CD8-positive, alpha-beta T cell (primary cell): ENCODE measurements at regions of chr5 and their contacts with region 1.

Region 1: DNA sequence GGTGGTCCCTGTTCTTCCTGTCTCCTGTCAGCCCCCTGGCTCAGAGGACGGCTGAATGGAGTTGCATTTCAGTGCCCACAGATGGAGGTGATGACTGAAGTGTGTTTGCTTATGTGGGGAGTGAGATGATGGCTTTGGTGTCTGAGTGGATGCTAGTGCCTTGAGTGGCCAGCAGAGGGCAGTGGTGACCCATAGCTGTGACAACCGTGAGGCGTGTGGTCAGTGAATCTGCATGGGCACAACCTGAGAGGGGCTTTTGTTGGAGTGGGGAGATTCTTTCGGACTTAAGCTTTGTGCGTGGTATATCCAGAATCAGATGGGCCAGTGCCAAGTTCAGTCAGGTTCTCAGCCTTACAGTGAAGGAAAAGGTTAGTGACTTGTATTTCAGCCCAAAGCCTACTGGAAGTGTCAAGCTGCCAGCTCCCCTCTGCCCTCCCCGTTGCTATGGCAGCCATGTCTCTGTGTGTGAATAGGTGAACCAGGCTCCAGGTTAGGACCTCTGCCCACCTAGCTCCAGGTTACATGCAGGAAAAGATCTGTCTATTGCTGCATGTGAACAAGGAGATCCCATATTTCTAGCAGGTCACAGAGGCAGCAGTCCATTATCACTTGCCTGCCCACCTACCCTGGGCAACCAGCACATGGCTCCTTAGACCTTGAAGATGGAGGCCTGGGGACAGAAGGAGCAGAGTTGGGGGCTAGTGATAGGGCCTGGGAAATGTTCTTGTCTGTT is 14.7 kb upstream of the CXXC5 start:
- DNase-seq: peak in 8 of 9 experiments; percentile 45 to 85 (median 71)
- ATAC-seq: peak; percentile 35
- H3K4me3 ChIP-seq: no peak overlapping the region
- H3K4me3 Mint-ChIP-seq: no peak overlapping the region
- H3K27ac ChIP-seq: no peak overlapping the region
- H3K27ac Mint-ChIP-seq: peak overlapping the region; percentile 24
- H3K4me1 ChIP-seq: peaks cover 42% of the 10 kb centered on the region
- H3K4me1 Mint-ChIP-seq: peaks cover 41% of the 10 kb centered on the region
- H3K27me3 ChIP-seq: no peaks in the 10 kb centered on the region
- H3K27me3 Mint-ChIP-seq: no peaks in the 10 kb centered on the region
- CTCF ChIP-seq: peak; percentile 89

Region 2: GRCh38 chr5:139415221-139415861 is 218.1 kb before region 1 on chr5:
- CTCF ChIA-PET with region 1: interaction called, 20 read pairs
- POLR2A ChIA-PET with region 1: no interaction called
- intact Hi-C with region 1: loop called in 1 of 2 experiments (anchors 5 kb)
- DNase-seq: no peak
- ATAC-seq: no peak
- H3K4me3 ChIP-seq: no peak overlapping the region
- H3K4me3 Mint-ChIP-seq: no peak overlapping the region
- H3K27ac ChIP-seq: no peak overlapping the region
- H3K27ac Mint-ChIP-seq: no peak overlapping the region
- H3K4me1 ChIP-seq: no peaks in the 10 kb centered on the region
- H3K4me1 Mint-ChIP-seq: peaks cover 5% of the 10 kb centered on the region
- H3K27me3 ChIP-seq: no peaks in the 10 kb centered on the region
- H3K27me3 Mint-ChIP-seq: no peaks in the 10 kb centered on the region
- CTCF ChIP-seq: no peak

Region 3: GRCh38 chr5:139560752-139561654 is 72.5 kb before region 1 on chr5 and contains the start of gene UBE2D2:
- CTCF ChIA-PET with region 1: interaction called, 37 read pairs
- POLR2A ChIA-PET with region 1: interaction called, 8 read pairs
- intact Hi-C with region 1: loop called in 1 of 2 experiments (anchors 1 kb)
- DNase-seq: peak; percentile 96 to 99 (median 97)
- ATAC-seq: peak; percentile 84
- H3K4me3 ChIP-seq: peak within 1 kb of the TSS; percentile 84 to 91
- H3K4me3 Mint-ChIP-seq: peak within 1 kb of the TSS; percentile 93
- H3K27ac ChIP-seq: peak within 1 kb of the TSS; percentile 87 to 89
- H3K27ac Mint-ChIP-seq: peak within 1 kb of the TSS; percentile 97
- H3K4me1 ChIP-seq: peaks cover 30% of the 10 kb centered on the region
- H3K4me1 Mint-ChIP-seq: peaks cover 35% of the 10 kb centered on the region
- H3K27me3 ChIP-seq: no peaks in the 10 kb centered on the region
- H3K27me3 Mint-ChIP-seq: no peaks in the 10 kb centered on the region
- CTCF ChIP-seq: no peak
- total RNA-seq, gene UBE2D2: 180 TPM

Region 4: DNA sequence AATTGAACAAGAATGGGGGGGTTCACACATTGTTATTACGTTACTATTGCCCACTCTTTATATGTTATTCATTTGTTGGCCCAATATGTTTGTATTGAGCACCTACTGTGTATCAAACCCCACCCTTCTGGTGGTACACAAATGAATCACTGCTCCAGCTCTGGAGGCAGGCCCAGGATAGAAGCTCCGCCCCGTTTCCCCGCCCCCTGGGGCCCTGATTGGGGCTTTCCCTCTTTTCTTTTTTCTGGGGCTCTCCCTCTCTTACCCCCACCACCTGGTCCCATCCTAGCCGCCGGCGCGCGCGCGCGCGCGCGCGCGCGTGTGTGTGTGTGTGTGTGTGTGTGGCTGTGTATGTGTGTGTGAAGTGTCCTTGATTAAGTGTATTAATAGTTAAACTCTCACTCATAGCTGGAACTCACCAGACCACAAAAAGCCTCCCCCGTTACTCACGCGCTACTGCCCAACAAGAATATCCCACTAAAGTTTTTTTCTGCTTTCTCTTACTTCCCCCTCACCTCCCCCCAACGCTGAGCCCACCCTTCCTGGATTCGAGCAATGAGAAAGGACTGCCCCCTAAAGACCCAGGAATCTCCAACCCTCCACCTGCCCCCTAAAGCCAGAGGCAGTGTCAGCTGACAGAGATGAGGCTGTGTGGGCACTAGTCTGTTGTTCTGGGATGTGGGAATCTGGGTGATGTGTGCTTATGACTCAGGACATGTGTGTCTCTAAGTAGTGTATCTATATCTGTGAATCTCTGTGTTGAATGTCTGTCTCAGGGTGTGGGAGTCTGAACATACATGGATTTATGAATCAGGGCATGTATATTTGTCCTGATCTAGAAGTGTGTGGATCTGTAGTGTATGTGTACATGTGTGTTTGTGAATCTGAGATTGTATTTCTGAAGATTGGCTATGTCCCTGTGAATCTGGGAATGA is 18.7 kb after region 1 on chr5:
- CTCF ChIA-PET with region 1: interaction called, 104 read pairs
- POLR2A ChIA-PET with region 1: interaction called, 42 read pairs
- intact Hi-C with region 1: loop called (anchors 1 kb)
- DNase-seq: peak in 7 of 9 experiments; percentile 43 to 88 (median 79)
- ATAC-seq: peak; percentile 65
- H3K4me3 ChIP-seq: no peak overlapping the region
- H3K4me3 Mint-ChIP-seq: peak overlapping the region; percentile 16
- H3K27ac ChIP-seq: peak overlapping the region in 1 of 2 experiments; percentile 26
- H3K27ac Mint-ChIP-seq: peak overlapping the region; percentile 47
- H3K4me1 ChIP-seq: peaks cover 60% of the 10 kb centered on the region
- H3K4me1 Mint-ChIP-seq: peaks cover 44% of the 10 kb centered on the region
- H3K27me3 ChIP-seq: peaks cover 23 to 25% of the 10 kb centered on the region in 2 experiments
- H3K27me3 Mint-ChIP-seq: peaks cover 30% of the 10 kb centered on the region
- CTCF ChIP-seq: no peak

Region 5: DNA sequence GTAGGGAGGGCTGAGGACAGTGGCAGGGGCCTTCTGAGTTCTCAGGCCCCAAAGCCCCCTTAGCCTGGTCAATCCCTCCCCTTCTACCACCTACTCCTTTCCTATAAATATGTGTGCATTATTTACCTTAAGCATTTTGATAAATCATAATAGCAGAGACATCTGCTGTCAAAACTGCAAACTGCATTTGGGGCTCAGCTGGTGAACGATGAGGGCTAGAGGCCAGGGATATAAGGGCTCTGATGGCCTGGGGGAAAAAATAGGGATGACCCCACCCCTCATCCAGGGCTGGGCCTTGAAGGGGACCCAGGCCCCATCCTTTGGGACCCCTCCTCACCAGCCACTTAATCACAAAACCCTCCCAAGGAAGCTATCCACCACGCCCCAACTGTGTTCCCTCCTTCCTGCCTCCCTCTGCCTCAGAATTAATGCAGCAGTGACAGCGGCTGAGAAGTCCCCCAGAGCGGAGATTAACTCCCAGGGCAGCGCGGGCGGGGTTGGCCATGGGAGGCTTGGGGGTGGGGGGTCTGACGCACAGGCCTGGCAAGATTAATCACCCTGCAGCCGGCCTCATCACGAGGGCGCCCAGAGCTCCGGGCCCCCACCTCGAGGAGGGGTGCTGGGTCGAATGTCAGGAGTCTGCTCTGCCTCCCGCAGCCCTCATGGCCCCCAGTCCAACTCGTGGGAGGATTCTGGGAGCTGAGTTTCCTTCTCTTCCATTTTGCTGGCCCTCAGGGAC is 56.8 kb after region 1 on chr5:
- CTCF ChIA-PET with region 1: interaction called, 150 read pairs
- POLR2A ChIA-PET with region 1: interaction called, 10 read pairs
- intact Hi-C with region 1: loop called (anchors 1 kb)
- DNase-seq: peak in 4 of 9 experiments; percentile 22 to 64 (median 38)
- ATAC-seq: peak; percentile 77
- H3K4me3 ChIP-seq: no peak overlapping the region
- H3K4me3 Mint-ChIP-seq: no peak overlapping the region
- H3K27ac ChIP-seq: no peak overlapping the region
- H3K27ac Mint-ChIP-seq: no peak overlapping the region
- H3K4me1 ChIP-seq: peaks cover 6% of the 10 kb centered on the region
- H3K4me1 Mint-ChIP-seq: peaks cover 19% of the 10 kb centered on the region
- H3K27me3 ChIP-seq: no peaks in the 10 kb centered on the region
- H3K27me3 Mint-ChIP-seq: no peaks in the 10 kb centered on the region
- CTCF ChIP-seq: peak; percentile 44

Region 6: DNA sequence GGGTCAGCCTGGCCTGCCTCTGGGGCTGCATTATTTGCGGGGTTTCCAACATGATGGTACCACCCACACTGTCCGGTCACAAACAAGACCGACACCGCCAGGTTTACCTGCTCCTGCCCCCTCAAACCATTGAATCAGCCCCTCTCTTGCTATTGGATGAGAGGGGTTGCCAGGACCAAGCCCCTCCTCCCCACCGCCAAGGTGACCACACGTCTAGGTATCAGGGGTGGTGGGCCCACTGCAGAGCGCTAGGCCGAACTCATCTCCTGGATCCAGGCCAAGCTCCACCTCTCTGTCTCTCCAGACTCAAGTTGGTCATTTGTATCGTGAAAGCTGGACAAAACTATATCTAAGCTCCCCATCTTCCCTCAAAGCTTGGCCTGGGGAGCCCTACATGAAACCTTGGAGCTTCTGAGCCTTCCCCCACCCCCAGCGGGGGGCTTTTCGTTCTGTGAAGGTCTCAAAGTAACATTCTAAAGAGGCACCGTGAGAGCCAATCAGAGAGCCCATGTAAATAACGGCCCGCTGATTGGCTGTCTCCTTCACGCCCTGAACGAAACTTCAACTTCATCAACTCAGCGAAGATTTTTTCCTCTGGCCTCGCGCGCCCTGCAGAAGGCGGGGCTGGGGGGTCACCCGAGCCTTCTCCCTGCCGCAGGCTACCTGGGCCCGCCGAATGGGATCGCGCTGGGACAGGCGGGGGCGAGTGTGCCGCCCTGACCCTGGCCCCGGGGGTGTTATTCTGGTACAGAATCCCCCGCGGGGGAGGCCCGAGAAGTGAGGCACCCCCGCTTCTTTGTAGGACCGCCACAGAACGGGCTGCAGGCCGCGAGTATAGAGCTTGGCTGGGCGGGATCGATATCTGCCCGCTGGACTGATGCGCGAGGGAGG is 112.6 kb after region 1 on chr5:
- CTCF ChIA-PET with region 1: interaction called, 7 read pairs
- POLR2A ChIA-PET with region 1: interaction called, 6 read pairs
- intact Hi-C with region 1: loop called (anchors 5 kb)
- DNase-seq: peak in 8 of 9 experiments; percentile 24 to 85 (median 58)
- ATAC-seq: peak; percentile 50
- H3K4me3 ChIP-seq: peak overlapping the region; percentile 61 to 73
- H3K4me3 Mint-ChIP-seq: peak overlapping the region; percentile 95
- H3K27ac ChIP-seq: peak overlapping the region in 1 of 2 experiments; percentile 89
- H3K27ac Mint-ChIP-seq: peak overlapping the region; percentile 64
- H3K4me1 ChIP-seq: peaks cover 20% of the 10 kb centered on the region
- H3K4me1 Mint-ChIP-seq: peaks cover 19% of the 10 kb centered on the region
- H3K27me3 ChIP-seq: no peaks in the 10 kb centered on the region
- H3K27me3 Mint-ChIP-seq: peaks cover 3% of the 10 kb centered on the region
- CTCF ChIP-seq: no peak

Region 7: GRCh38 chr5:139968547-139969261 is 335.2 kb after region 1 on chr5:
- CTCF ChIA-PET with region 1: interaction called, 3 read pairs
- POLR2A ChIA-PET with region 1: no interaction called
- intact Hi-C with region 1: loop called (anchors 5 kb)
- DNase-seq: peak; percentile 80 to 92 (median 88)
- ATAC-seq: peak; percentile 100
- H3K4me3 ChIP-seq: no peak overlapping the region
- H3K4me3 Mint-ChIP-seq: no peak overlapping the region
- H3K27ac ChIP-seq: no peak overlapping the region
- H3K27ac Mint-ChIP-seq: no peak overlapping the region
- H3K4me1 ChIP-seq: no peaks in the 10 kb centered on the region
- H3K4me1 Mint-ChIP-seq: no peaks in the 10 kb centered on the region
- H3K27me3 ChIP-seq: no peaks in the 10 kb centered on the region
- H3K27me3 Mint-ChIP-seq: peaks cover 5% of the 10 kb centered on the region
- CTCF ChIP-seq: peak; percentile 99